PC-9 (cell line): ENCODE measurements at regions of chr4 and their contacts with region 1.

Region 1: GRCh38 chr4:92599029-92599428 is 295.3 kb downstream of the GRID2 start:
- DNase-seq: peak in 1 of 2 experiments; percentile 36
- H3K4me3 ChIP-seq: no peak overlapping the region
- H3K27ac ChIP-seq: no peak overlapping the region
- H3K4me1 ChIP-seq: no peaks in the 10 kb centered on the region
- H3K27me3 ChIP-seq: no peaks in the 10 kb centered on the region
- CTCF ChIP-seq: no peak

Region 2: GRCh38 chr4:91127831-91128230 is 1471.2 kb before region 1 on chr4:
- CTCF ChIA-PET with region 1: no interaction called
- POLR2A ChIA-PET with region 1: no interaction called
- intact Hi-C with region 1: loop called (anchors 10 kb)
- DNase-seq: no peak
- H3K4me3 ChIP-seq: no peak overlapping the region
- H3K27ac ChIP-seq: no peak overlapping the region
- H3K4me1 ChIP-seq: no peaks in the 10 kb centered on the region
- H3K27me3 ChIP-seq: no peaks in the 10 kb centered on the region
- CTCF ChIP-seq: no peak

Region 3: GRCh38 chr4:91924625-91925024 is 674.4 kb before region 1 on chr4:
- CTCF ChIA-PET with region 1: no interaction called
- POLR2A ChIA-PET with region 1: no interaction called
- intact Hi-C with region 1: no loop called
- DNase-seq: no peak
- H3K4me3 ChIP-seq: no peak overlapping the region
- H3K27ac ChIP-seq: no peak overlapping the region
- H3K4me1 ChIP-seq: no peaks in the 10 kb centered on the region
- H3K27me3 ChIP-seq: no peaks in the 10 kb centered on the region
- CTCF ChIP-seq: no peak